Naive thymus-derived CD8-positive, alpha-beta T cell (primary cell): ENCODE measurements at regions of chr17 and their contacts with region 1.

Region 1: GRCh38 chr17:77957857-77958715 is at the start of gene TNRC6C:
- DNase-seq: peak; percentile 97 to 100 (median 100)
- ATAC-seq: peak; percentile 78 to 86
- H3K4me3 Mint-ChIP-seq: peak within 1 kb of the TSS; percentile 96 to 100 (median 99)
- H3K27ac Mint-ChIP-seq: peak within 1 kb of the TSS; percentile 94 to 99 (median 97)
- H3K4me1 Mint-ChIP-seq: peaks cover 33 to 49% (median 42%) of the 10 kb centered on the region in 4 donors
- H3K27me3 Mint-ChIP-seq: peaks cover 0 to 11% (median 0%) of the 10 kb centered on the region in 5 donors
- polyA plus RNA-seq, gene TNRC6C: 4.9 to 8.6 (median 5.8) TPM

Region 2: GRCh38 chr17:77609553-77610517 is 348.3 kb before region 1 on chr17:
- POLR2A ChIA-PET with region 1: interaction called, 30 read pairs
- DNase-seq: peak; percentile 44 to 89 (median 74)
- ATAC-seq: peak; percentile 98 to 99
- H3K4me3 Mint-ChIP-seq: peak overlapping the region; percentile 61 to 89 (median 82)
- H3K27ac Mint-ChIP-seq: peak overlapping the region; percentile 91 to 99 (median 96)
- H3K4me1 Mint-ChIP-seq: peaks cover 27 to 38% (median 34%) of the 10 kb centered on the region in 4 donors
- H3K27me3 Mint-ChIP-seq: no peaks in the 10 kb centered on the region

Region 3: GRCh38 chr17:77783991-77784820 is 173.9 kb before region 1 on chr17:
- POLR2A ChIA-PET with region 1: interaction called, 21 read pairs
- DNase-seq: peak; percentile 20 to 76 (median 56)
- ATAC-seq: peak; percentile 96 to 97
- H3K4me3 Mint-ChIP-seq: peak overlapping the region in 9 of 10 donors; percentile 38 to 66 (median 52)
- H3K27ac Mint-ChIP-seq: peak overlapping the region; percentile 83 to 98 (median 90)
- H3K4me1 Mint-ChIP-seq: peaks cover 6 to 20% (median 11%) of the 10 kb centered on the region in 4 donors
- H3K27me3 Mint-ChIP-seq: peaks cover 0 to 3% (median 0%) of the 10 kb centered on the region in 5 donors

Region 4: GRCh38 chr17:77875881-77876509 is 82.1 kb before region 1 on chr17:
- POLR2A ChIA-PET with region 1: interaction called, 166 read pairs
- DNase-seq: no peak
- ATAC-seq: peak in 1 of 2 donors; percentile 9
- H3K4me3 Mint-ChIP-seq: peak overlapping the region in 8 of 10 donors; percentile 4 to 58 (median 48)
- H3K27ac Mint-ChIP-seq: peak overlapping the region; percentile 4 to 85 (median 64)
- H3K4me1 Mint-ChIP-seq: peaks cover 42 to 97% (median 94%) of the 10 kb centered on the region in 4 donors
- H3K27me3 Mint-ChIP-seq: no peaks in the 10 kb centered on the region

Region 5: GRCh38 chr17:77927777-77928518 is 30.1 kb before region 1 on chr17:
- POLR2A ChIA-PET with region 1: interaction called, 11 read pairs
- DNase-seq: no peak
- ATAC-seq: no peak
- H3K4me3 Mint-ChIP-seq: peak overlapping the region in 6 of 10 donors; percentile 14 to 73 (median 52)
- H3K27ac Mint-ChIP-seq: peak overlapping the region in 5 of 10 donors; percentile 2 to 78 (median 60)
- H3K4me1 Mint-ChIP-seq: peaks cover 17 to 35% (median 23%) of the 10 kb centered on the region in 4 donors
- H3K27me3 Mint-ChIP-seq: peaks cover 0 to 8% (median 0%) of the 10 kb centered on the region in 5 donors

Region 6: DNA sequence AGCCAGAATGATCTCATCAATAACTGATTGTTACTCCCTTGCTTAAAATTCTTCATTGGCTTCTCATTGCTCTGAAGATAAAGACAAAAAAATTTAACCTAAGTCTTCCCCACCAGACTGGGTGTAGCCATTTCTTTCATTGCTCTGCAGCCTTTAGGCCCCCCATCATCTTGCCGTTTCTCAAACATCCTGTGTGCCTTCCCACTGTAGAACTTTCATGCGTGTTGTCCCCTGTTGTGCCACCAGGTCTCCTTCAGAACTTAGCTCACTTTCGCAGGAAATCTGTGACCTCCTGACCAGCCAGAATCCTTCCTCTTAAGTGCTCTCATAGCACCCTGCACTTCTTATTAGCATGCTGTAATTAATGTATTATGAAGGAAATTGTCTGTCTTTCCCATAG is 32.2 kb after region 1 on chr17:
- POLR2A ChIA-PET with region 1: interaction called, 20 read pairs
- DNase-seq: peak in 2 of 10 donors; percentile 20 to 25
- ATAC-seq: peak; percentile 59 to 71
- H3K4me3 Mint-ChIP-seq: peak overlapping the region in 7 of 10 donors; percentile 1 to 64 (median 24)
- H3K27ac Mint-ChIP-seq: peak overlapping the region; percentile 7 to 78 (median 44)
- H3K4me1 Mint-ChIP-seq: peaks cover 42 to 76% (median 62%) of the 10 kb centered on the region in 4 donors
- H3K27me3 Mint-ChIP-seq: no peaks in the 10 kb centered on the region

Region 7: GRCh38 chr17:78051186-78051972 is 93.3 kb after region 1 on chr17:
- POLR2A ChIA-PET with region 1: no interaction called
- DNase-seq: no peak
- ATAC-seq: no peak
- H3K4me3 Mint-ChIP-seq: no peak overlapping the region
- H3K27ac Mint-ChIP-seq: peak overlapping the region in 6 of 10 donors; percentile 7 to 64 (median 53)
- H3K4me1 Mint-ChIP-seq: peaks cover 7 to 55% (median 34%) of the 10 kb centered on the region in 4 donors
- H3K27me3 Mint-ChIP-seq: no peaks in the 10 kb centered on the region

Region 8: GRCh38 chr17:78133971-78134898 is 176.1 kb after region 1 on chr17:
- POLR2A ChIA-PET with region 1: interaction called, 21 read pairs
- DNase-seq: peak; percentile 64 to 93 (median 80)
- ATAC-seq: peak; percentile 19 to 27
- H3K4me3 Mint-ChIP-seq: peak overlapping the region; percentile 75 to 100 (median 90)
- H3K27ac Mint-ChIP-seq: peak overlapping the region; percentile 87 to 97 (median 90)
- H3K4me1 Mint-ChIP-seq: peaks cover 49 to 86% (median 79%) of the 10 kb centered on the region in 4 donors
- H3K27me3 Mint-ChIP-seq: no peaks in the 10 kb centered on the region